A673 (cell line): ENCODE measurements at regions of chr3 and their contacts with region 1.

Region 1: DNA sequence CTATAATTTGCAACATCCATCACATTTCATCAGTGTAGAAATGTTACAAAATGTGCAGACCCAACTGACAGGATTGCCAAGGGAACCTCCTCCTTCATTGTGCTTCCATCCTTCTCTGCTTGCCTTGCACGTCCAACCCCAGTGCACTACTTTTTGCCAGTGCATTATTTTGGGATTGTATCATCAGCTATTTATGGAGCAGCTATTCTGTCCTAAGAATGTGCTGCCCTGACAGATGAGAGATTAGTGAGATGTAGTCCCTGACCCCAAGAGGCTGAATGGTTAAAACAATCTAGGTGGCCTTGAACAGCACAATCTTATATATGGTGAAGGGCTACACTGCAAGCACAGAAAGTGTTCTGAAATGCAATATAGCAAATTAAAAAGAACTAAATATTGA is 935.8 kb downstream of the IGSF11 start:
- DNase-seq: no peak
- H3K4me3 ChIP-seq: no peak overlapping the region
- H3K27ac ChIP-seq: no peak overlapping the region
- H3K4me1 ChIP-seq: no peaks in the 10 kb centered on the region
- H3K27me3 ChIP-seq: no peaks in the 10 kb centered on the region
- CTCF ChIP-seq: no peak

Region 2: DNA sequence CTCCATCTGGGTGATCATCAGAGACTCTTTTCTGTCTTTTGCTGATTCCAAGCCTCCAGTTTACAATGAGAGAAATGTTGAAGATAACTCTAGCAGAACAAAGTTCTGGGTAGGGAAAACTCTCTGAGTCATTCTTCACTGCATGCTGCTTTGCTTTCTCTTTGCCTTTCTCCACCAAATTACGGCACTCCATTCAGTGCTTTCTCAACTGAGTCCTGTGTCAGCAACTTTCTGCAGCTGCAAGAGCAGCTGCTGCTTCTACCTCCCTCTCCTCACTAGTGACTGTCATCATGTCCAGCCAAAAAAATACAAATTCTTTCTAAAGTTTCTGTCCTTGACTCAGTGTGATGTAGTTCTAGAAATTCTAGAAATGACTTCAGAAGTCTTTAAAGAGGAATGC is 17.9 kb before region 1 on chr3:
- CTCF ChIA-PET with region 1: interaction called, 5 read pairs
- POLR2A ChIA-PET with region 1: interaction called, 11 read pairs
- intact Hi-C with region 1: no loop called
- DNase-seq: no peak
- H3K4me3 ChIP-seq: no peak overlapping the region
- H3K27ac ChIP-seq: no peak overlapping the region
- H3K4me1 ChIP-seq: no peaks in the 10 kb centered on the region
- H3K27me3 ChIP-seq: no peaks in the 10 kb centered on the region
- CTCF ChIP-seq: no peak